ENCODE measurements at regions of chr16 and their contacts with region 1.

Region 1: GRCh38 chr16:66894948-66895688 is 14.8 kb downstream of the PDP2 start:
- DNase-seq: peak; percentile 64 to 78
- ATAC-seq: peak; percentile 69 to 79 (median 76)
- H3K4me3 ChIP-seq: no peak overlapping the region
- H3K27ac ChIP-seq: peak overlapping the region; percentile 30
- H3K4me1 ChIP-seq: peaks cover 17% of the 10 kb centered on the region
- H3K27me3 ChIP-seq: no peaks in the 10 kb centered on the region
- CTCF ChIP-seq: peak; percentile 83

Region 2: GRCh38 chr16:66934153-66934838 is 39.2 kb after region 1 on chr16 and contains the start of gene CIAO2B:
- intact Hi-C with region 1: loop called in 1 of 2 experiments (anchors 5 kb)
- DNase-seq: peak; percentile 93 to 95
- ATAC-seq: peak; percentile 77 to 88 (median 79)
- H3K4me3 ChIP-seq: peak within 1 kb of the TSS; percentile 91
- H3K27ac ChIP-seq: peak within 1 kb of the TSS; percentile 91
- H3K4me1 ChIP-seq: peaks cover 42% of the 10 kb centered on the region
- H3K27me3 ChIP-seq: no peaks in the 10 kb centered on the region
- CTCF ChIP-seq: no peak
- total RNA-seq, gene CIAO2B: 145 to 346 (median 248) TPM

Region 3: DNA sequence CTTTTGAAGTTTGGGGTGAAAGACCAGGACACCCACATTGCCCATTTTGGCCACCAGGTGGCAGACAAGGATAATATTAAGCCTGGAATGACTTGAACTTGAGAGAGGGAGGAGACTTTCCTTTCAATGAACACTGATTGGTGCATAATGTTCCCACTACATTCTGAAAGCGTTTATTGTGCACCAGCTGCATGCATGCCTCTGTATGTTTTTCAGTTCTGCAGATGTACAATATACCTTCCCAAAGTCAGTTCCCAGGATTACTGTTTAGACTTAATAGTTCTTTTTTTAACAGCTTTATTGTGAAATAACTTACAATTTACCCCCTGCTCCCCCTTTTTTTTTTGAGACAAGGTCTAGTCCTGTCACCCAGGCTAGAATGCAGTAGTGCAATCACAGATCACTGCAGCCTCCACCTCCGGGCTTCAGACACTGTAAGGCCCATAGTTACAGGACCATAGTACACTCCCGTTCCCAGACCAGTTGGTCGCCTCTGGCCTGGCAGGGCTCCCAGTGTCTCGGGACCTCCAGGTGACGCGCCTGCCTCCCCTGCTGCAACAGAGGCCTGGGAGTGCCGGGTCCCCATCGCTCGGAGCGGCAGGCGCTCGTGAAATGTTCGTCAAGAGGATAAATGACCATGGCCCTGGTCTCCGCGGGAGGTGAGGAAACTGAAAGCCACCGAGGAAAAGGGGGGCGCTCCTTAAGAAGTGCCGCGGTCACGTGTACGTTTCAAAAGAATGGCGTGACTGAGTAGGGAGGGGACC is 52.4 kb after region 1 on chr16:
- intact Hi-C with region 1: loop called (anchors 5 to 10 kb)
- DNase-seq: peak; percentile 83 to 85
- ATAC-seq: peak; percentile 60 to 75 (median 64)
- H3K4me3 ChIP-seq: peak overlapping the region; percentile 77
- H3K27ac ChIP-seq: peak overlapping the region; percentile 91
- H3K4me1 ChIP-seq: peaks cover 3% of the 10 kb centered on the region
- H3K27me3 ChIP-seq: no peaks in the 10 kb centered on the region
- CTCF ChIP-seq: peak; percentile 92

Region 4: DNA sequence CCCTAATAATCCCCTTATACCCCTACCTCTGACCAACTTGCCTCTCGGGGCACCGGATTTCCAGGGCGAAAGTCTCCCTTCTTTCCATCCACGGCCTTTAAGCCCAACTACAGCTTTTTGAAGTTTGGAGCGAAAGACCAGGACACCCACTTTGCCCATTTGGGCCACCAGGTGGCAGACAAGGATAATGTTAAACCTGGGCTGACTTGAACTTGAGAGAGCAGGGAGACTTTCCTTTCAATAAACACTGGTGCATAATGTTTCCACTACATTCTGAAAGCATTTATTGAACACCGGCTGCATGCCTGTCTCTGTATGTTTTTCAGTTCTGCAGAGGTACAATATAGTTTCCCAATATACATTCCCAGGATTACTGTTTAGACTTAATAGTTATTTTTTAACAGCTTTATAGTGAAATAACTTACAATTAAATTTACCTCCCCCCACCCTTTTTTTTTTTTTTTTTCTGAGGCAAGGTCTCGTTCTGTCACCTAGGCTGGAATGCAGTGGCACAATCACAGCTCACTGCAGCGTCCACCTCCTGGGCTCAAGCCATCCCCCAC is 59.1 kb after region 1 on chr16:
- intact Hi-C with region 1: loop called (anchors 5 to 10 kb)
- DNase-seq: peak; percentile 77 to 82
- ATAC-seq: peak; percentile 62 to 79 (median 64)
- H3K4me3 ChIP-seq: peak overlapping the region; percentile 1
- H3K27ac ChIP-seq: peak overlapping the region; percentile 91
- H3K4me1 ChIP-seq: peaks cover 19% of the 10 kb centered on the region
- H3K27me3 ChIP-seq: no peaks in the 10 kb centered on the region
- CTCF ChIP-seq: peak; percentile 83

Region 5: DNA sequence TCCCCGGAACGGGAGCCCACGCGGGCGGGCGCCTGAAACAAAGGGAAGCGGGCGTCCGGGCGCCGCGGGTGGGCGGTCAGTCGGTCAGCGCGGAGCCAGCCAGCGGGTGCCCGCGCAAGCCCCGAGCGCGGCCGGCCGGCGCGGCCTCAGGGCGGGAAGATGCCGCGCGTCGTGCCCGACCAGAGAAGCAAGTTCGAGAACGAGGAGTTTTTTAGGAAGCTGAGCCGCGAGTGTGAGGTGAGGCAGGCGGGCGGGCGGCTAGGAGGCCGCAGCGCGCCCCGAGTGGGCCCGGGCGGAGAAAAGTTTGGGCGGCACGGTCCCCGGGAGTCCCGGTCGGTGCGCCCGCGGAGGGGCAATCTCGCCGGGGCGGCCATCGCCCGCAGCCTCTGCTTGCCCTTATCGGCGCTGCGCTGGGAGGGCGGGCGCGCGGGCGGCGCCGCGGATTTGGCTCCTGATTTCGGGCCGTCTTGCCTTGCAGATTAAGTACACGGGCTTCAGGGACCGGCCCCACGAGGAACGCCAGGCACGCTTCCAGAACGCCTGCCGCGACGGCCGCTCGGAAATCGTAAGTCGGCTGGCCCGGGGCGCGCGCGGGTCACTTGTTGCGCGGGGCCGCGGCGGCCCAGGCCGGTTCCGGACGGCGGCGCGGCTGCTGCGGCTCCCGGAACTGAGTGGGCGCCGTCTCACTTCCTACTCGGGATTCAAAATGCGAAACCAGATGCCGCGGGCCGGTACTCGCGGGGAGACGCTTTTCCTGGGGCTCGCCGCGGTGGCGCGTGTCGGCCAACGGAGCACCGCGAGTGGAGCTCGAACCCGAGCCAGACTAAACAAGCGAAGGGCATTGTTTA is 134.4 kb after region 1 on chr16:
- intact Hi-C with region 1: no loop called
- DNase-seq: peak; percentile 68 to 86
- ATAC-seq: peak; percentile 46 to 69 (median 64)
- H3K4me3 ChIP-seq: peak overlapping the region; percentile 99
- H3K27ac ChIP-seq: peak overlapping the region; percentile 98
- H3K4me1 ChIP-seq: peaks cover 26% of the 10 kb centered on the region
- H3K27me3 ChIP-seq: no peaks in the 10 kb centered on the region
- CTCF ChIP-seq: no peak